ENCODE measurements at regions of chr11 and their contacts with region 1.

Region 1: DNA sequence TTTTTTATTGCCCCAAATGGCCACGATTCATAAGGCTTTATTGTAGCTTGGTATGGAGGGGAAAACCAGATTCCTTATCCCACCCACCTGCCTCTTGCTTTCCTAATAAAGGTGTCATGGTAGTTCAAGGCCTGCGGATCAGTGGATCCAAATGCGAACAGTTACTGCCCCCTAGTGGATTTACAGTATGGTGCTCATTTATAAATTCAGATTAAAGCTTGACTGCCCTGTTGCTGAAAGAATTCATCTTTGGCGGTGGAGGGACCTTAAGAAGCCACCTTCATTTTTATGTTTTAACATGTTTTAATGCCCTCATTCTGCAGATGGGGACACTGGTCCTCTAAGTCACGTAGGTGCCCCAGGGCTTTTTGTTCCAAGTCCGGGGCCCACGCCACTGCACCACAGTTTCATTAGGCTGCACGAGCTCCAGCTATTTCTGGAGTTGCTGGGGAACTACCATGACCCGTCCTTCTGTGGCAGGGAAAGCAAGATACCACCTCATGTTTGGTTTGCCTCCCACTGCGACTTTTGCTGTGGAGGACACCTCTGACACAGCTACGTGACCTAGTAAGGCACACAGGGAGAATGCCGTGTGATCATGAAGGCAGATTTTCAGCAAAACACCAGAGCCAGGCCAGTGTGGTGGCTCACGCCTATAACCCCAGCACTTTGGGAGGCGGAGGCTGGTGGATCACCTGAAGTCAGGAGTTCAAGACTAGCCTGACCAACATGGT is 15.6 kb upstream of the INCENP start:
- DNase-seq: no peak
- ATAC-seq: peak; percentile 37

Region 2: GRCh38 chr11:61752117-61752924 is 355.9 kb before region 1 on chr11 and contains the start of gene MYRF:
- intact Hi-C with region 1: loop called (anchors 2 kb)
- DNase-seq: no peak
- ATAC-seq: peak; percentile 42
- total RNA-seq, gene MYRF: 0.30 TPM

Region 3: DNA sequence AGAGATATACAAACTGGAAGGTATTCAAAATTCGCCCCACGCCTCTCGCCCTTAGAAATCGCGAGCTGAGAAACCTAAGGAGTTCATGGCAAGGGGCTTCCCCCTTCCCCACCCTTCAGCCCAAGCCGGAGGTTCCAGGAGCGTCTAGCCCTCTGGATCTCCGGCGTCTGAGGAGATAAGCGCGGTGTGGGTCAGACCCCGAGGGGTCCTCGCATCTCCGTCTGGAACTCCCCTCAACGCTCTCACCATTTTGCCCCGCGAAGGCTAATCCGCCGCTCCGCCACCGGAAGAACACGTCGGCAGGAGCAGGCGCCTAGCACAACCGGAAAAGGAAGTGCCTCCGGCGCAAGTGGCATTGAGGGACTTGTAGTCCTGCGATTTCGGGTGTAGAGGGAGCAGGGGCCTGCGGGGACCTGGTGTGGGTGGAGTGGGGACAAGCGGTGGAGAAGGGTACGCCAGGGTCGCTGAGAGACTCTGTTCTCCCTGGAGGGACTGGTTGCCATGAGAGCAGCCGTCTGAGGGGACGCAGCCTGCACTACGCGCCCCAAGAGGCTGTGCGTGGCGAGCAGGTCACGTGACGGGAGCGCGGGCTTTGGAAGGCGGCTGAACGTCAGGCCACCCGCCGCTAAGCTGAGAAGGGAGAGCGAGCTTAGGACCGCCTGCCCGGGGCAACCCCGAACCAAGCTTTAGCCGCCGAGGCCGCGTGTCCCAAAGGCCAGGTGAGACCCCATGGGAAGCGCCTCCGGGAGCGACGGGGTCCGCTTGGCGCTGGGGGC is 315.7 kb before region 1 on chr11 and contains the starts of genes FEN1 and TMEM258:
- intact Hi-C with region 1: loop called (anchors 2 kb)
- DNase-seq: peak; percentile 95
- ATAC-seq: peak; percentile 93
- total RNA-seq, gene FEN1: 7.0 TPM
- total RNA-seq, gene TMEM258: 130 TPM

Region 4: DNA sequence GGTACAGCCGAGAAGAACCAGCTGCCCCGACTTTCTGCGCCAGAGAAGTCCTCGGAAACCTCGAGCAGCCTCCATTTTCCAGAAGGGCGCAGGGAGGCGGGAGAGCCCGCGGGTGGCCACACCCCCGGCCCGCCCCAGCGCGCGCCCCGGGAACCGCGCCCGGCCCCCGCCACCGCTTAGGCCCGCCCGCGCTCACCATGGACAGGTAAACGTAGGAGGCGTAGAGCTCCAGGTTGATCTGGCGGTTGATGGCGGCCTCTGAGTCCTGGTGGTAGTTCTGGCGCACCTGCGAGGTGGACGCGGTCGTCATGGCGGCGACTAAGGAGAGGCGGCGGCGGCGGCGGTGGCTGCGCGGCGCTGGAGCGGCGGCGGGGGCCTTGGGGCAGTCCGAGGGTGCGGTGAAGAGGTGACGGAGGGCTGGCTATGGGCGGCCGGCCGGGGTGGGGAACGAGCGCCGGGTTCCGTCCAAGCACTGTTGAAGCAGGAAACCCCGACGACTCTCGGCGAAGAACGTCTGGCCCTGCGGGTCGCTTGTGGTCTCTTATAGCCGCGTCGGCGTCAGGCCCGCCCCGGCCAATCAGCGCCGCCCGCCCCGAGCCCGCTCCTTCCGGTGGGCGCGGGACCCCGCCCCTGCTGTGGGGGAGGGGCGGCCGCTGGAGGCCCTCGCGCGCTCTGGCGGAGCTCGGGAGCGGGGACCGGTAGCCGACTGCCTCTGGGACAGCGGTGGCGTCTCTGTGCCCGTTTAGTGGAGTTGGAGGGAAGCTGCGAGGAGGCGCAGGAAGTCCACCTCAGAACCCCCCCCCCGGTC is 140.9 kb before region 1 on chr11 and contains the start of gene FTH1:
- intact Hi-C with region 1: loop called (anchors 5 kb)
- DNase-seq: peak; percentile 96
- ATAC-seq: peak; percentile 85
- total RNA-seq, gene FTH1: 2,493 TPM

Region 5: DNA sequence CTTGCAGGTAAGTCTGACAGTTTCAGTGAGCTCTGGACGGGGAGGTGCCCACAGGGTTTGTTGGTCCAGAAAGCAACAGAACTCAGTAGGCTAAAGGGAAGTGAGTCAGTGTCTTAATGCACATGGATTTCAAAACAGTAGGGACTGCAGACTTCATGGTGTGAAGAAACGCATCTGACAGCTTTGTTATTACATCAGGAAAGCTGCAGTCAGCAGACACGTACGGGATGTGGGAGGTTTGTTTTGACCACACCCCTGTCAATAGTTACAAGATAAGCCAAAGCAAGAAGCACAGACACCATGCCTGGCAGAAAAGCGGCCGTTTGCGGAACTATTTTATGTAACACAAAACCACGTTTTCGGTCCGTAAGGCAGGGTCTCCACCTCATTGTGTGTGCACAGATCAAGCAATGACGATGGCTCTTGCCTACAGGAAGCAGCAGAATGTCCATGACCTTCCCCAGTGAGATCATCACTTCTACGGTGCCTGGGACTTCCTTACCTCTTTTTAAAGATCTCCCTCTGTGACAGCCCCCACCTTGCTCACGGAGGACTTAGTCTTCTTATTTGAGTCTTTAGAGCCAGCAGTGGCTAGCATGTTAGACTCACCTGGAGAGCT is 82.6 kb before region 1 on chr11:
- intact Hi-C with region 1: no loop called
- DNase-seq: peak; percentile 87
- ATAC-seq: peak; percentile 94

Region 6: DNA sequence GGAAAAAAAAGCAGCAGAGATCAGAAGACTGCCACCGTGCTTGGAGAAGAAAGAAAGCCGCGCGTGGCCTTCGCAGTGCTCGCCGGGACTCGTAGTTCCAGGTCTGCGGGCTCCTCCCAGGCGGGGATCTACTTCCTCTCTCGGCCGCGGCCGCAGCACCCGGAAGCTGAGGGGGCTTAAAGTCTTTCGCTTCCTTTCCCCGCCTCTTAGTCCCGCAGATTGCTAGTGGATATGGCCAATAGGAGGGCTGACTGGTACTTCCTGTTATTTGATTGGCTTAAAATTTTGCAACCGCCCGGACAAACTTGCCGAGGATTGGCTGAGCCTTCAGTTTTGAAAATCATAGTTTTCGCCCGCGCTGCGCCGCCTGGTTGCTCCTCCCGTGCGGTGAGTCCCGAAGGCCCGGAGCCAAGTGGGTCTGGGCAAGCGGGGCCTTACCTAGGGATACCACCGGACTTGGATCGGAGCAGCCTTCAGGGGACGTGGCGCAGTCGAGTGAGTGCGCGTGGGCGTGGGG is 15.5 kb after region 1 on chr11 and contains the start of gene INCENP:
- intact Hi-C with region 1: no loop called
- DNase-seq: peak; percentile 98
- ATAC-seq: peak; percentile 99
- total RNA-seq, gene INCENP: 10.5 TPM